Sigmoid colon (tissue), 7 donors: ENCODE measurements at regions of chr1 and their contacts with region 1.

Region 1: DNA sequence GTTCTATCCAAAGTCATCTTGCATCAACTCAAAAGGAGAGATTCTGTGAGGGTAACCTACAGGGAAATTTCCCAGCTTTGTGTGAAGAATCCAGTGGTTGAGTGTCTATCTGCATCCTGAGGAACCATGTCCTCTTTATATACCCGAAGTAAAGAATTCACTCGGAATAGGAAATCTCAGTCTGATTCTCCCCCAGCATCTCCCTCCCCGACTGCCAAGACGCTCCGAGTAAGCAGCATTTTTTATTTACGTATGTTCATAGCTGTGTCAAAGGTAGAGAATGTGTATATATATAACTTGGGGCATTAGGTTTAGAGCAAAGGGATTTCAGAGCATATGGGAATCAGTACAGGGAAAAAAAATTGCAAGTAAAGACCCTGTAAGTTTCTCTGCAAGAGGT is 170.2 kb downstream of the SYT2 start:
- DNase-seq: no peak
- H3K4me3 ChIP-seq: peak overlapping the region; percentile 58 to 60 (median 59)
- H3K27ac ChIP-seq: peak overlapping the region; percentile 84 to 94 (median 89)
- H3K4me1 ChIP-seq: peaks cover 0 to 26% (median 14%) of the 10 kb centered on the region in 4 donors
- H3K27me3 ChIP-seq: no peaks in the 10 kb centered on the region
- CTCF ChIP-seq: no peak
- EP300 ChIP-seq: no peak
- POLR2A ChIP-seq: no peak

Region 2: DNA sequence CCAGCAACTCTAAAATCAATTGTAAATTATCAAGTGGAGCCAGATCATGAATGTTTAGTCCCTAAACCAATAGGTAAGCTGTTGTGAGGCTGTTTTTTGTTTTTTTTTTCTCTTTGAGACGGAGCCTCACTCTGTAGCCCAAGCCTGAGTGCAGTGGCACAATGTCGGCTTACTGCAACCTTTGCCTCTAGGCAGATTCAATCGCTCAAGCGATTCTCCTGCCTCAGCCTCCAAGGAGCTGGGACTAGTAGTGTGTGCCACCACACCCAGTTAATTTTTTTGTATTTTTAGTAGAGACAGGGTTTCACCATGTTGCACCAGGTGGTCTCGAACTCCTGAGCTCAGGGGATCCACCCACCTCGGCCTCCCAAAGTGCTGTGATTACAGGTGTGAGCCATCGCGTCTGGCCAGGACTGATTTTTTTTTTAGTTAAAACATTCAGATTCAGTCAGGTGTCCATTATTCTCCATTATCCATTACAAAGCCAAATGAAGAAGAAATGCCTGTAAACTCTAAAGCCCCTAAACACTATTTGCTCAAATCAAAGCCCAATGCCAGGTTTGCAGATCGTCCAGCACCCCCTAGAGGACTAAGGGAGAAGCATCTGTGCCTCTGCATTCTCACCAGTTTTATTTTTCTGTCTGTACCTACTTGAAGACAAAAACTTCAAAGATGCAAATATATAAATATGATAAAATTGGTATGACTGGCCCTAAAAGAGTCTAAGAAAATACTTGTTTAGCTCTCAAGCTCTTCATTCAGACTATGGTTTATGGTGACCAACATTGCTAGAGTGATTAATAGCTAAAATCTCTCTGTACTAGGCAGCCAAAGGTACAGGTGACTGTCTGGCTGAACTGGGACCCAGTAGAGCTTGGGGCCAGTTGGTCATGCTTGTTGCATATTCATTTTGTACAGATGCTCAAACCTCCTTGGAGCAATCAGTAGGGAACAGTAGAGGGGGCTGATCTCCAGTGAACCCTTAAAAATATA is 31.6 kb after region 1 on chr1:
- intact Hi-C with region 1: loop called (anchors 5 kb)
- DNase-seq: no peak
- H3K4me3 ChIP-seq: no peak overlapping the region
- H3K27ac ChIP-seq: peak overlapping the region; percentile 78 to 94 (median 85)
- H3K4me1 ChIP-seq: peaks cover 0 to 100% (median 98%) of the 10 kb centered on the region in 4 donors
- H3K27me3 ChIP-seq: no peaks in the 10 kb centered on the region
- CTCF ChIP-seq: peak; percentile 25 to 70 (median 64)
- EP300 ChIP-seq: no peak
- POLR2A ChIP-seq: no peak